ENCODE measurements at regions of chr20 and their contacts with region 1.

Region 1: GRCh38 chr20:49278036-49278817 is at the start of gene ZNFX1:
- DNase-seq: peak; percentile 97
- H3K4me3 ChIP-seq: peak within 1 kb of the TSS; percentile 85 to 93 (median 90)
- H3K27ac ChIP-seq: peak within 1 kb of the TSS; percentile 79
- H3K4me1 ChIP-seq: peaks cover 51% of the 10 kb centered on the region
- H3K27me3 ChIP-seq: no peaks in the 10 kb centered on the region
- CTCF ChIP-seq: no peak
- total RNA-seq, gene ZNFX1: 24.9 to 34.0 TPM

Region 2: DNA sequence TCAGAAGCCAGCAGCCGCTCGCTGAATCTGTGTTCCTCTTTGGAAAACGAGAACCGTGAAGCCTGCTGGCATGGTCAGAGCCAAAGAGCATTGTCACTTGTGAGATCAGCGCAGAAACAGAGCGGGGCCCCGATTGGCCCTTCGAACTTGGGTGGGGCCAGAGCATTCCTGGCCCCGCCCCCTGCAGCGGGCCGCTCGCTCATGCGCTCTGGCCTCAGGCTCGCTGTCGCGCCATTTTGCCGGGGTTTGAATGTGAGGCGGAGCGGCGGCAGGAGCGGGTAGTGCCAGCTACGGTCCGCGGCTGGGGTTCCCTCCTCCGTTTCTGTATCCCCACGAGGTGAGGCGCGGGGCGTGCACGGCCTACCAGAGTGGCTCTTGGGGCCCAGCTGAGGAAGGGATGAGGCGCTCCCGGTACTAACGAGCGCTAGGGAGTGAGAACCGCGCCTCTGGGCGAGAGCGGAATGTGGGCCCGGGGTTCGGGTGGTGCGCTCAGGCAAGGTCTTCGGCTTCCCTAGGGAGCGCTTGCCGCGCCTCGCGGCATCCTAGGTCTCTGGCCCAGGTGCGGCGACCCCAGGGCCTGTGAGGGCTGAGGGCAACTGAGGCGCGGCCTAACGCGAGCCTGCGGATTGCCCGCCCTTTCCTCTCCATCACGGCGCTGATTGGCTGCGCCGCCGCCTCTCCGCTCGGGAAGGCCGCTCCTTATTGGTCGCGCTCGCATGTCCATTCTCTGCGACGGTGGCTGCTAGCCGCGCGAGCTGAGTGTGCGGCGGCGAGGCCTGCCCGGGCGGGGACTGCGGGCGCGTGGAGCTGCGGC is 231.9 kb before region 1 on chr20 and contains the start of gene CSE1L:
- CTCF ChIA-PET with region 1: no interaction called
- dilution Hi-C with region 1: no loop called
- in situ Hi-C with region 1: no loop called
- intact Hi-C with region 1: loop called (anchors 2 kb)
- DNase-seq: peak; percentile 93
- H3K4me3 ChIP-seq: peak within 1 kb of the TSS; percentile 73 to 100 (median 87)
- H3K27ac ChIP-seq: peak within 1 kb of the TSS; percentile 88
- H3K4me1 ChIP-seq: peaks cover 26% of the 10 kb centered on the region
- H3K27me3 ChIP-seq: no peaks in the 10 kb centered on the region
- CTCF ChIP-seq: no peak
- total RNA-seq, gene CSE1L: 83.5 to 114 TPM

Region 3: GRCh38 chr20:49186535-49187329 is 91.5 kb before region 1 on chr20:
- CTCF ChIA-PET with region 1: no interaction called
- dilution Hi-C with region 1: no loop called
- in situ Hi-C with region 1: no loop called
- intact Hi-C with region 1: loop called (anchors 2 kb)
- DNase-seq: peak; percentile 66
- H3K4me3 ChIP-seq: peak overlapping the region; percentile 67 to 82 (median 79)
- H3K27ac ChIP-seq: peak overlapping the region; percentile 68
- H3K4me1 ChIP-seq: peaks cover 7% of the 10 kb centered on the region
- H3K27me3 ChIP-seq: no peaks in the 10 kb centered on the region
- CTCF ChIP-seq: no peak

Region 4: GRCh38 chr20:49203746-49204145 is 74.5 kb before region 1 on chr20:
- CTCF ChIA-PET with region 1: no interaction called
- dilution Hi-C with region 1: no loop called
- in situ Hi-C with region 1: no loop called
- intact Hi-C with region 1: no loop called
- DNase-seq: no peak
- H3K4me3 ChIP-seq: no peak overlapping the region
- H3K27ac ChIP-seq: no peak overlapping the region
- H3K4me1 ChIP-seq: no peaks in the 10 kb centered on the region
- H3K27me3 ChIP-seq: no peaks in the 10 kb centered on the region
- CTCF ChIP-seq: no peak

Region 5: GRCh38 chr20:49323622-49324238 is 45.5 kb after region 1 on chr20:
- CTCF ChIA-PET with region 1: interaction called, 6 read pairs
- dilution Hi-C with region 1: no loop called
- in situ Hi-C with region 1: no loop called
- intact Hi-C with region 1: loop called (anchors 1 kb)
- DNase-seq: peak; percentile 73
- H3K4me3 ChIP-seq: no peak overlapping the region
- H3K27ac ChIP-seq: no peak overlapping the region
- H3K4me1 ChIP-seq: peaks cover 9% of the 10 kb centered on the region
- H3K27me3 ChIP-seq: peaks cover 16% of the 10 kb centered on the region
- CTCF ChIP-seq: peak; percentile 25 to 59